Activated CD4-positive, alpha-beta T cell treated with anti-CD3 and anti-CD28 coated beads for 36 hours (primary cell): ENCODE measurements at regions of chr10 and their contacts with region 1.

Region 1: DNA sequence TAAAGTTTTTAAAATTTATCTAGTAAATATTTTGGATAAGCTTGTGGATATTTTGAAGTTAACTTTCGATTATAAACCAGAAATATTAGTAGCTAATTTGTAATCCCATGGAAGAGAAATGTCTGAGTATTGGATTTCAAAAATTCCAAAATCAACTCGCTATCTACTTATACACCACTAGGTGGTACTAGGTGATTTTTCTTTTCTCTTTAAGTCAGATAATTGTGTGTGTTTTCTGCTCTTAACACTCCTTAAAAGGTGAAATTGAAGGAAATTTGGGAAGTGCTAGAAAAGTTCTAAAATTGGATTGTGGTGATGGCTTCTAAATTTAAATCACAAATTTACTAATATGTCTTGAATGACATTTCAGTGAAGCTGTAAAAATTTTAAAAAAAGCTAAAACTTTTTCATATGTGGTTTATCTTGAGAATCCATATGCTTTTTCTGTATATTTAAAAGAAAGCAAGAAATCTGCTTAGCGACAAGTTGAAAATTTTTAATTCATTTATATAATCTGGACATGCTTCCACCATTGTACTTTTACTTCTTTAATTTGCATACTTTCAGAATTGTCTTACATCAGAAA is 90.2 kb downstream of the IPMK start:
- DNase-seq: no peak
- ATAC-seq: no peak
- H3K4me3 Mint-ChIP-seq: no peak overlapping the region
- H3K27ac Mint-ChIP-seq: no peak overlapping the region
- H3K4me1 Mint-ChIP-seq: no peaks in the 10 kb centered on the region
- H3K27me3 Mint-ChIP-seq: peaks cover 2% of the 10 kb centered on the region

Region 2: DNA sequence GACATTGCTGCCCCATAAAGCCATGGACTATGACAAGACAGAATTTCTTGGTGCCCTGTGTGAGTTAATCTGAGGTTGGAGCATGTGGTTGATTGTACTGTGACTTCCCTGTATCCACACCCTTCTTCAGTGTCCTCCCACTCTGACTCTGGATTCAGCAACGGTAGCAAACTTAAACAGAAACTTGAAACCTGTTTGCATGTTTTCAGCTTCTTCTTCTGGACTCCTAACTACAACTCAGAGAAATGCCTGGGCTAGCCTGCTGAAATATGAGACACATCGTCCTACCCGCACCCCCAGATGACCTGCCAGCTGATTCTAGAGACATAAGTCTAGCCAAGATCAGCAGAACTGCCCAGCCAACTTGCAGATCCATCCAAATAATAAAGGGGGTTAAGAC is 11.8 kb after region 1 on chr10:
- CTCF ChIA-PET with region 1: interaction called, 16 read pairs
- POLR2A ChIA-PET with region 1: no interaction called
- intact Hi-C with region 1: no loop called
- DNase-seq: no peak
- ATAC-seq: no peak
- H3K4me3 Mint-ChIP-seq: no peak overlapping the region
- H3K27ac Mint-ChIP-seq: no peak overlapping the region
- H3K4me1 Mint-ChIP-seq: no peaks in the 10 kb centered on the region
- H3K27me3 Mint-ChIP-seq: peaks cover 14% of the 10 kb centered on the region

Region 3: GRCh38 chr10:58291538-58292174 is 114.2 kb after region 1 on chr10:
- CTCF ChIA-PET with region 1: interaction called, 152 read pairs
- POLR2A ChIA-PET with region 1: no interaction called
- intact Hi-C with region 1: loop called (anchors 1 kb)
- DNase-seq: peak; percentile 50
- ATAC-seq: peak; percentile 71
- H3K4me3 Mint-ChIP-seq: no peak overlapping the region
- H3K27ac Mint-ChIP-seq: no peak overlapping the region
- H3K4me1 Mint-ChIP-seq: no peaks in the 10 kb centered on the region
- H3K27me3 Mint-ChIP-seq: no peaks in the 10 kb centered on the region